ENCODE measurements at regions of chr11 and their contacts with region 1.

Region 1: GRCh38 chr11:2930704-2931428 is 1.6 kb upstream of the PHLDA2 start:
- DNase-seq: peak; percentile 71
- ATAC-seq: peak; percentile 20
- H3K4me3 Mint-ChIP-seq: peak overlapping the region; percentile 85
- H3K27ac Mint-ChIP-seq: peak overlapping the region; percentile 71
- H3K4me1 Mint-ChIP-seq: peaks cover 32% of the 10 kb centered on the region
- H3K27me3 Mint-ChIP-seq: peaks cover 25% of the 10 kb centered on the region

Region 2: DNA sequence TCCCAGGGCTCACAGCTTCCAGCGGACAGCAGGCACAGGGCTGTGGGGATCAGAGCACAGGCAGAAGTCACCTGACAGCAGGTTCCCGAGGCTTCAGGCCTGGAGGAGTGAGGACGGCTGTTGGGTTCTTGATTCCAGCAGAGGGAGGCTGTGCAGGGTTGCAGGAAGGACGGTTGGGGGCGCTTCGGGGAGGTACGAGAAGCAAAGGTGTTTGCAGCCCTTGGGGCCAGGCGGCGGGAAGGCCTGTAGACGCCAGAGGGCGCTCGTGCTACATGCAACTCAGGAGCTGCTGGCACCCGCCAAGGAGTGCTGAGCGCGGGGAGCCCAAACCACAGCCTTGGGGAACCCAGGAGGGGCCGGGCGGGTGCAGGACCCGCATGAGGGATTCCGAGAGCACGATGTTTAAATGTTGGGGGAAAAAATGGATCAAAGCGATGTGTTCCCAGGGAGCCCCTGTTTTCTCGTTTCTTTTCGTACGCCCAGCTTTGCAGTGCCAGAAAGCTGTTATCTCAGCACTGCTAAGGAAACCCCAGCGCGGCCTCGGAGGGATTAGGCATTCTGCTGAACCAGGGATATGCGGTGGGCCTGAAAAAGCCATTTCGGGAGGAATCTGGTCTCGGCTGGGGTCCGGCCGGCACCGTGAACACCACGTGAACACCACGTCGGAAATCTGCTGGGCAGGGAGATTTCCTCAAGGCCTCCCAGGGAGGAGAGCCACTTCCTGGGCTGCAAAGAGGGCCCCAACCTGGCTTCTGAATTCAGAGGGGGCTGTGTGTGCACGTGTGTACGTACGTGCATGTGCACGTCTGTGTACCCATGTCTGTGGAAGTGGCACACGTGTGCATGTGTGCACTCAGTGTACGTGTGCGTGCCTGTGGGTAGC is 397.9 kb before region 1 on chr11:
- POLR2A ChIA-PET with region 1: interaction called, 11 read pairs
- DNase-seq: peak; percentile 95
- ATAC-seq: peak; percentile 87
- H3K4me3 Mint-ChIP-seq: peak overlapping the region; percentile 82
- H3K27ac Mint-ChIP-seq: peak overlapping the region; percentile 68
- H3K4me1 Mint-ChIP-seq: peaks cover 15% of the 10 kb centered on the region
- H3K27me3 Mint-ChIP-seq: no peaks in the 10 kb centered on the region

Region 3: DNA sequence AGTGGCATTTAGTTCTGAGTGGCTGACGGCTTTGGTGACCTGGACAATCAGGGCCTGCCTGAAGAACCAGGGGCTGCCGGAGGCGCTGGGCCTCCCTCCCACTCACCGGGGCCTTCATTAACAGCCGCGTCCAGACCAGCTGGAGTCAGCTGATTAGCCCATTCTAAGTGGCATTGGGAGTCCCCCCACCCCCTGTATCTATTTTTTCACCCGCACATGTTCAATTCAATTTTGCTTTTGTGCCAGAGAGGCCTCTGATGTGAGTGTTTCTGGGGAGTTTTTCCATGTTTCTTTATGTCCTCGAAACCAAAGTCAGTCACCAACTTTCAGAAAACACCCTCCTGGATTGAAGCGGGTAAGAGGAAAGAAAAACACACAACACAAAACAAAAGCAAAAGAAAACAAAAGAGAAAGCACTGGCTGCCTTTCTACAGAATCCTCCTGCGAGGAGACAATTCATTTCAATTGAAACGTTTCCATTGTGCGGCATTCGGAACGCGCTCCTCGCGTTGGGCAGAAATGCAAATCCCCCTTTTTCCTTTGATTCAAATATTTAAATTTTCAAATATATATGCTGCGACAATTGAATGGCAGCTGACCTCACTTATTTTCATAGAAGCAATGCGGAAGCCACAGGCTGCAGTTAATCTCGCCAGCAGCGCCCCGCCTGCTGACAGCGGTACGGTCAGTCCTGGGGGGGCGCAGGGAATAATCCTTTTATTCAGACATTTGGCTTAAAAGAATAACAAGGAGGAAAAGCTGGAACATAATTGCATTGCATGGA is 63.0 kb before region 1 on chr11:
- POLR2A ChIA-PET with region 1: no interaction called
- DNase-seq: no peak
- ATAC-seq: no peak
- H3K4me3 Mint-ChIP-seq: peak overlapping the region; percentile 19
- H3K27ac Mint-ChIP-seq: no peak overlapping the region
- H3K4me1 Mint-ChIP-seq: peaks cover 9% of the 10 kb centered on the region
- H3K27me3 Mint-ChIP-seq: peaks cover 65% of the 10 kb centered on the region

Region 4: GRCh38 chr11:2892215-2893020 is 38.4 kb before region 1 on chr11:
- POLR2A ChIA-PET with region 1: interaction called, 21 read pairs
- DNase-seq: peak; percentile 78
- ATAC-seq: peak; percentile 76
- H3K4me3 Mint-ChIP-seq: peak overlapping the region; percentile 83
- H3K27ac Mint-ChIP-seq: peak overlapping the region; percentile 89
- H3K4me1 Mint-ChIP-seq: peaks cover 15% of the 10 kb centered on the region
- H3K27me3 Mint-ChIP-seq: peaks cover 2% of the 10 kb centered on the region

Region 5: DNA sequence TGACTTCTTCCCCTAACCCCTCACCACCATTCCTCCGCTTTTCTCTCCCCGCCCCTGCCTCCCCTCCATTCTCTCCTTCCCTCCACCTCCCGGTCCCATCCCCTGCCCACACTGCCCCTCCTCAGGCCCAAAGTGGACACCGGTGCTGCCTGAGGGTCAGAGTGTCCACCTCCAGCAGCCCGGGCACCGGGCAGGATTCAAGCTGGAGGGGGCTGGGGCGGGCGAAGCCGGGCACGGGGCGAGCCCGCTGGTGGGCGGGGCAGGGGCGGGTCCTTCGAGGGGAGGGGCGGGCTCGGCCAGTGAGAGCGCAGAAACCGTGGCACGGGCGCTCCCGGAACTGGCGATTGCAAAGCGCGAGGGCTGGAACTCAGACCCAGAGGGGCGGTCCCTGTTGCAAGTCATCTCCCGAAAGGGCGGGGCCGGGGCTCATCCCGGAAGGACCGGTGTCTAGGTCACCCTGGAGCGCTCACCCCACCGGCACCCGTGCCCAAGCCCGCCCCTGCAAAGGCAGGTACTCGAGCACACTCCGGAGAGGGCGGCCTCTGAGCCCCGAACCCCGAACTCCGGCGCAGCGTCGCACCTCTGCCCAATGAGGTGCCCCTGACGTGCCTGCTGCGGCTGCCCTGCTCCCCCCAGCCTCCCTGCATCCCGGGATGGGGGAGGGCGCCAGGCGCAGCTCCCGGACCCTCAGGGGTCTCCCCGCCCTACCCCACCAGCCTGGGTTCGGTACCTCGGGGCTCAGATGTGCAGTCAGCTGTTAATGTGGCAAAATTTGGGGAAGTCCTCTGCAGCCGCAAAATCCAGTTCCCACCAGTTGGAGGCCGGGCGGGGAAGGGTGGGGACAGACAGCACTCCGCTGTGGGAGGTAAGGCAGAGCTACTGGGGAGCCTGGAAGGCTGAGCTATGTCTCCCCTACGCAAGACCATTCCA is 28.7 kb before region 1 on chr11:
- POLR2A ChIA-PET with region 1: interaction called, 10 read pairs
- DNase-seq: peak; percentile 91
- ATAC-seq: peak; percentile 89
- H3K4me3 Mint-ChIP-seq: peak overlapping the region; percentile 71
- H3K27ac Mint-ChIP-seq: peak overlapping the region; percentile 62
- H3K4me1 Mint-ChIP-seq: peaks cover 23% of the 10 kb centered on the region
- H3K27me3 Mint-ChIP-seq: no peaks in the 10 kb centered on the region

Measured in activated naive CD8-positive, alpha-beta T cell treated with anti-CD3 and anti-CD28 coated beads, Interleukin-2, amount 10 ng/mL, durations not matched to agents 7 days and 5 days (primary cell).